ENCODE measurements at regions of chr12 and their contacts with region 1.

Region 1: GRCh38 chr12:117098361-117099217 is 627 bp downstream of the TESC start:
- DNase-seq: no peak
- ATAC-seq: peak; percentile 17

Region 2: GRCh38 chr12:117031843-117032592 is 66.6 kb before region 1 on chr12:
- intact Hi-C with region 1: loop called (anchors 2 kb)
- DNase-seq: no peak
- ATAC-seq: no peak

Region 3: GRCh38 chr12:117052386-117053049 is 46.1 kb before region 1 on chr12:
- intact Hi-C with region 1: loop called (anchors 2 kb)
- DNase-seq: peak; percentile 44
- ATAC-seq: peak; percentile 17

Region 4: DNA sequence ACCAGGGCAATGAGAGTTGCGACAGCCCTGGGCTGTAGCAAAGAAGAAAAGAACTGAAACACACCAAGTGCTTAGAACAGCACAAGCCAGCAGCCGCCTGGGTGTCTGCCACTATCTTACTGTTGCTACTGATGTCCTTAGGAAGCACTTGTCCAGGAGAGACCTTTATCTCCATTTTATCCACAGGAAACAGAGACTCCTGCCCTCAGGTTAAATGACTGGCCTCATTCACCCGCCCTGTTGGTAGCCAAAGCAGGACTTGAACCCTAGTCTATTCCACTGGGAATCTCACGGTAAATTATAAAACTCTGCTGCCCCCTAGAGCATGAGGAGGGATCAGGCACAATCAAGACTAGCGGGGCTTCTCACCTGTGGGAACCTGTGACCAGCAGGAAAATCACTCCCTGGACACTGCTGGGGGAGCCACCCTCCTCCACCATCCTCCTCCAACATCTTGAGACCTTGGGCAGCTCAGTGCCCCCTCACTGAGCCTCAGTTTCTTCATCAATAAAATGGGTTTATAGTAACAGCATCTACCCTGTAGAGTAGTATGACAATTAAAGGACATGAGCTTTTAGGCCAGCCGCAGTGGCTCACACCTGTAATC is 21.1 kb after region 1 on chr12:
- intact Hi-C with region 1: no loop called
- DNase-seq: peak; percentile 71
- ATAC-seq: peak; percentile 35

Region 5: DNA sequence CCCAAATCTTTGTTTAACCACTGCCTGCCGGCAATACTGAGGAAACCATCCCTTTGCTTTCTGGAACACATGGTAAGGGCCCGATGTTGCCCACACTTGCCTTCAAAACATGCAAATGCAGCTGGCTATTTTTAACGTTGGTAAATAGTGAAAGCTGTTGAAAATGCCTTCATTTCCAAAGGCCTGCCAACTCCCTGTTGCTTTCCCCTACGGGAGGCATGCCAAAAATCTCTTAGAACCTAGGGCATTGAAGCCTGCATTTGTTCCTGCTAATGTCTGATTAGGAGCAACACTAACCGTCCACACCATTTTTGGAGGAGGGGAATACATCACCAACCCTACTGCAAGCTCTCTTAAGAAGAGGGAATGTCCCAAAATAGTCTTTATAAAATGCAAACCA is 415.4 kb after region 1 on chr12:
- intact Hi-C with region 1: no loop called
- DNase-seq: no peak
- ATAC-seq: peak; percentile 69

Measured in Right ventricle myocardium inferior (tissue), 1 donor.